Endothelial cell of umbilical vein (primary cell): ENCODE measurements at regions of chr11 and their contacts with region 1.

Region 1: GRCh38 chr11:128575961-128576350 is 11.4 kb downstream of the ETS1 start:
- DNase-seq: peak; percentile 96
- H3K4me3 ChIP-seq: no peak overlapping the region
- H3K27ac ChIP-seq: peak overlapping the region; percentile 84
- H3K4me1 ChIP-seq: peaks cover 43% of the 10 kb centered on the region
- H3K27me3 ChIP-seq: no peaks in the 10 kb centered on the region
- CTCF ChIP-seq: no peak
- POLR2A ChIP-seq: peak; percentile 28

Region 2: GRCh38 chr11:128603752-128604414 is 27.9 kb after region 1 on chr11:
- CTCF ChIA-PET with region 1: no interaction called
- POLR2A ChIA-PET with region 1: no interaction called
- dilution Hi-C with region 1: no loop called
- intact Hi-C with region 1: loop called (anchors 1 kb)
- DNase-seq: no peak
- H3K4me3 ChIP-seq: no peak overlapping the region
- H3K27ac ChIP-seq: no peak overlapping the region
- H3K4me1 ChIP-seq: no peaks in the 10 kb centered on the region
- H3K27me3 ChIP-seq: peaks cover under 1 to 12% of the 10 kb centered on the region in 2 experiments
- CTCF ChIP-seq: no peak
- POLR2A ChIP-seq: no peak